Naive thymus-derived CD4-positive, alpha-beta T cell (primary cell): ENCODE measurements at regions of chr1 and their contacts with region 1.

Region 1: GRCh38 chr1:6602669-6603237 is at the start of gene KLHL21:
- DNase-seq: peak; percentile 70 to 93 (median 79)
- ATAC-seq: peak; percentile 82
- H3K4me3 ChIP-seq: peak within 1 kb of the TSS; percentile 98
- H3K4me3 Mint-ChIP-seq: peak within 1 kb of the TSS; percentile 89 to 99 (median 96)
- H3K27ac ChIP-seq: peak within 1 kb of the TSS; percentile 94
- H3K27ac Mint-ChIP-seq: peak within 1 kb of the TSS; percentile 95 to 99 (median 98)
- H3K4me1 ChIP-seq: peaks cover 28 to 30% of the 10 kb centered on the region in 2 donors
- H3K4me1 Mint-ChIP-seq: peaks cover 13 to 40% (median 34%) of the 10 kb centered on the region in 7 donors
- H3K27me3 ChIP-seq: no peaks in the 10 kb centered on the region
- H3K27me3 Mint-ChIP-seq: peaks cover 0 to 2% (median 0%) of the 10 kb centered on the region in 5 donors
- total RNA-seq, gene KLHL21: 25.2 to 58.1 (median 33.0) TPM

Region 2: DNA sequence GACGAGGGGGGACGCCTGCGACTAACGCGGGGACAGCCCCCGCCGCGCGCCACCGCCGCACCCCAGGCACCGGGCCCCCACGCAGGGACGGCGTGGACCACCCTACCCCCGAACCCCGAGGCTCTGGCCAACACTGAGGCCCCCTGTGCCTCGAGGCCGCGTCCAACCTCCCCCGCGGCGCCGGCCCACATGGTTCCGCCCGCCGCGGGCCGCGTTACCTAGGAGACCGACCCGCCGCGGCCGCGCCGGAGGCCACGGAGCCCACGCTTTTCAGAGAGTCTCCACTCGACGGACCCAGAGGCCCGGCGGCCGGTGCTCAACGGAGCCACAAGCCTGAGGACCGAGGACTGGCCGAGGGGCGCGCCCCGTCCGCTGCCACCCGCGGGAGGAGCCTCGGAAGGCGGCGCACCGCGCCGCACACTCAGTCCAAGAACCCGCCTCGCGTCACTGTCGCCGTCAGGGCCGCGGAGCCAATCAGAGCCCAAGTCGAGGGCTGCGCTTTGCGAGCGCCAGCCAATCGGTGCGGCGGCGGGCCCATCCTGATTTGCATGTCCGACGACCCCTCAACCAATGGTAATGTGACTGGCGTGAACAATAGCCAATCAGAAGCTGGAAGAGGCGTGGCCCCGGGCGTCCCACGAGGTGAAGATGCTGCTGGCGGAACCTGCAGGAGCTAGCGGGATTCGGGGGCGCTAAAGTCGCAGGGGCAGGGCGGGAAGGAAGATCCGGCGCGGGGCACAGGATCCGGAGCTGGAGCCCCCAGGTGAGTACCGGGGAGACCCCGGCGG is 610.5 kb before region 1 on chr1 and contains the start of gene NPHP4:
- CTCF ChIA-PET with region 1: no interaction called
- POLR2A ChIA-PET with region 1: no interaction called
- intact Hi-C with region 1: loop called (anchors 5 kb)
- DNase-seq: peak; percentile 95 to 99 (median 99)
- ATAC-seq: peak; percentile 93
- H3K4me3 ChIP-seq: peak within 1 kb of the TSS; percentile 88
- H3K4me3 Mint-ChIP-seq: peak within 1 kb of the TSS; percentile 88 to 100 (median 96)
- H3K27ac ChIP-seq: peak within 1 kb of the TSS; percentile 94
- H3K27ac Mint-ChIP-seq: peak within 1 kb of the TSS; percentile 88 to 97 (median 96)
- H3K4me1 ChIP-seq: peaks cover 23 to 32% of the 10 kb centered on the region in 2 donors
- H3K4me1 Mint-ChIP-seq: peaks cover 23 to 49% (median 40%) of the 10 kb centered on the region in 7 donors
- H3K27me3 ChIP-seq: no peaks in the 10 kb centered on the region
- H3K27me3 Mint-ChIP-seq: peaks cover 0 to 2% (median 0%) of the 10 kb centered on the region in 5 donors
- total RNA-seq, gene NPHP4: 9.0 to 20.6 (median 11.1) TPM

Region 3: DNA sequence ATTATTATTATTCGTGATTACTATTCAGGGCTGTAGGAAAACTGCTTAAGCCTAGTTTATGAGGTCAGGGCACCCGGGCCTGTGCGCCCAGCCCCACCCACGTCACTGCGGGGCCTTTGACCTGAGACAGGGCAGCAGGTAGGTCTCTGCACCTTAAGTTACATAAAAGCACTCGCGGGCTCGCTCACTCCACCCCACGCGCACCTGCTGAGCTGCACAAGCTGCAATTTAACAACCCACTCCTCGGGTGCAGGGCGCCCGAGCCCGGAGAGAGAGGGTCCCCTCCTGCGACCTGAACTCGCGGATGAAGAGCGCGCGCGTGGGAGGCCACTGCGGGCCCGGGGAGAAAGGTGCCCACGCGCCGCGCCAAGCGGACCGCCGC is 367.5 kb before region 1 on chr1:
- CTCF ChIA-PET with region 1: no interaction called
- POLR2A ChIA-PET with region 1: no interaction called
- intact Hi-C with region 1: loop called in 1 of 2 experiments (anchors 5 kb)
- DNase-seq: no peak
- ATAC-seq: peak; percentile 3
- H3K4me3 ChIP-seq: peak overlapping the region; percentile 43
- H3K4me3 Mint-ChIP-seq: peak overlapping the region; percentile 79 to 90 (median 87)
- H3K27ac ChIP-seq: peak overlapping the region; percentile 66
- H3K27ac Mint-ChIP-seq: peak overlapping the region in 6 of 9 donors; percentile 28 to 78 (median 47)
- H3K4me1 ChIP-seq: peaks cover 0 to 12% of the 10 kb centered on the region in 2 donors
- H3K4me1 Mint-ChIP-seq: peaks cover 0 to 28% (median 18%) of the 10 kb centered on the region in 7 donors
- H3K27me3 ChIP-seq: no peaks in the 10 kb centered on the region
- H3K27me3 Mint-ChIP-seq: peaks cover 11 to 15% (median 12%) of the 10 kb centered on the region in 5 donors

Region 4: GRCh38 chr1:6547301-6547700 is 55.5 kb before region 1 on chr1:
- CTCF ChIA-PET with region 1: no interaction called
- POLR2A ChIA-PET with region 1: interaction called, 72 read pairs
- intact Hi-C with region 1: loop called in 1 of 2 experiments (anchors 2 kb)
- DNase-seq: no peak
- ATAC-seq: no peak
- H3K4me3 ChIP-seq: no peak overlapping the region
- H3K4me3 Mint-ChIP-seq: peak overlapping the region in 4 of 10 donors; percentile 62 to 76 (median 68)
- H3K27ac ChIP-seq: peak overlapping the region; percentile 68
- H3K27ac Mint-ChIP-seq: peak overlapping the region; percentile 73 to 99 (median 91)
- H3K4me1 ChIP-seq: peaks cover 4 to 28% of the 10 kb centered on the region in 2 donors
- H3K4me1 Mint-ChIP-seq: peaks cover 25 to 44% (median 33%) of the 10 kb centered on the region in 7 donors
- H3K27me3 ChIP-seq: no peaks in the 10 kb centered on the region
- H3K27me3 Mint-ChIP-seq: no peaks in the 10 kb centered on the region

Region 5: GRCh38 chr1:6587261-6588005 is 15.3 kb before region 1 on chr1:
- CTCF ChIA-PET with region 1: interaction called, 3 read pairs
- POLR2A ChIA-PET with region 1: interaction called, 153 read pairs
- intact Hi-C with region 1: no loop called
- DNase-seq: no peak
- ATAC-seq: no peak
- H3K4me3 ChIP-seq: no peak overlapping the region
- H3K4me3 Mint-ChIP-seq: peak overlapping the region in 1 of 10 donors; percentile 5
- H3K27ac ChIP-seq: no peak overlapping the region
- H3K27ac Mint-ChIP-seq: peak overlapping the region in 6 of 9 donors; percentile 27 to 78 (median 50)
- H3K4me1 ChIP-seq: peaks cover under 1 to 8% of the 10 kb centered on the region in 2 donors
- H3K4me1 Mint-ChIP-seq: peaks cover 12 to 55% (median 41%) of the 10 kb centered on the region in 7 donors
- H3K27me3 ChIP-seq: no peaks in the 10 kb centered on the region
- H3K27me3 Mint-ChIP-seq: no peaks in the 10 kb centered on the region

Region 6: GRCh38 chr1:6646499-6647148 is 43.9 kb after region 1 on chr1:
- CTCF ChIA-PET with region 1: interaction called, 9 read pairs
- POLR2A ChIA-PET with region 1: interaction called, 4 read pairs
- intact Hi-C with region 1: loop called in 1 of 2 experiments (anchors 1 kb)
- DNase-seq: peak in 7 of 9 donors; percentile 33 to 64 (median 54)
- ATAC-seq: peak; percentile 70
- H3K4me3 ChIP-seq: no peak overlapping the region
- H3K4me3 Mint-ChIP-seq: no peak overlapping the region
- H3K27ac ChIP-seq: no peak overlapping the region
- H3K27ac Mint-ChIP-seq: no peak overlapping the region
- H3K4me1 ChIP-seq: no peaks in the 10 kb centered on the region
- H3K4me1 Mint-ChIP-seq: peaks cover 0 to 6% (median 0%) of the 10 kb centered on the region in 7 donors
- H3K27me3 ChIP-seq: no peaks in the 10 kb centered on the region
- H3K27me3 Mint-ChIP-seq: no peaks in the 10 kb centered on the region